ENCODE measurements at regions of chr7 and their contacts with region 1.

Region 1: GRCh38 chr7:24812310-24812945 is 55.2 kb upstream of the GSDME start:
- DNase-seq: peak; percentile 24 to 60 (median 37)
- H3K4me3 ChIP-seq: no peak overlapping the region
- H3K27ac ChIP-seq: no peak overlapping the region
- H3K4me1 ChIP-seq: no peaks in the 10 kb centered on the region
- H3K27me3 ChIP-seq: no peaks in the 10 kb centered on the region

Region 2: GRCh38 chr7:24800667-24801066 is 11.8 kb before region 1 on chr7:
- CTCF ChIA-PET with region 1: interaction called, 11 read pairs
- POLR2A ChIA-PET with region 1: no interaction called
- DNase-seq: no peak
- H3K4me3 ChIP-seq: no peak overlapping the region
- H3K27ac ChIP-seq: no peak overlapping the region
- H3K4me1 ChIP-seq: no peaks in the 10 kb centered on the region
- H3K27me3 ChIP-seq: no peaks in the 10 kb centered on the region

Region 3: DNA sequence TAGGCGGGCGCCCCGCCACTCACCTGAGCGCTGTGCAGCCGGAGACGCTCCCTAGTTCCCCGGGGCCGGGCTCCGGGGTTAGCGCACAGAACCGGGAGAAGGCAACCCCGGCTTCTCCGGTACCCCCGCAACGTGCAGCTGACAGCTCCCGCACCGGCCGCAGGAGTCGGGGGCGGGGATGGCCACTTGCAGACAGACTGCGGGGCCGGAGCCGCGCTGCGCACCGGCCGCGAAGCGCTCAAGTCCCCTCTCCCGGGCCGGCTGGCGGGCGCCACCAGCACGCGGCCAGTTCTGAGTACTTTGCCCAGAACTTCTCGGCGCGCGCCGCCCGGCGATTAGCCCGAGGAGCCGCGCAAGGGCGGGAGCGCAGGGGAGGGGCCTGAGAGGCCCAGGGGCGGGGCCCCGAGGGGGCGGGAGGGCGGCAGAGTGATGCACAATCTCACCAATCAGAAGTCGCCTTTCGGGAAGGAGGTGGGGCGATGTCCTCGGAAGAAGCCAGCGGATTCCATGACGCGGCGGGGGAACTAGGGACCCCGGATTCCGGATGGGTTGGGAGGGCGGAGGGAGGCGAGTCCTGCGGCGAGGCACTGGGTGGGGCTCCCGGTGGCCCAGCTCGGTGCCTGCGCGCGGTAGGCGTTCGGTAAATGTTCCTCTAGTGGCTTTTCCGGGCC is 167.6 kb after region 1 on chr7 and contains the start of gene OSBPL3:
- CTCF ChIA-PET with region 1: interaction called, 10 read pairs
- POLR2A ChIA-PET with region 1: no interaction called
- DNase-seq: peak; percentile 93 to 97 (median 97)
- H3K4me3 ChIP-seq: peak within 1 kb of the TSS; percentile 78 to 93 (median 84)
- H3K27ac ChIP-seq: peak within 1 kb of the TSS in 1 of 2 experiments; percentile 79
- H3K4me1 ChIP-seq: peaks cover 0 to 37% (median 28%) of the 10 kb centered on the region in 4 experiments
- H3K27me3 ChIP-seq: peaks cover 0 to 4% (median 0%) of the 10 kb centered on the region in 5 experiments

Region 4: DNA sequence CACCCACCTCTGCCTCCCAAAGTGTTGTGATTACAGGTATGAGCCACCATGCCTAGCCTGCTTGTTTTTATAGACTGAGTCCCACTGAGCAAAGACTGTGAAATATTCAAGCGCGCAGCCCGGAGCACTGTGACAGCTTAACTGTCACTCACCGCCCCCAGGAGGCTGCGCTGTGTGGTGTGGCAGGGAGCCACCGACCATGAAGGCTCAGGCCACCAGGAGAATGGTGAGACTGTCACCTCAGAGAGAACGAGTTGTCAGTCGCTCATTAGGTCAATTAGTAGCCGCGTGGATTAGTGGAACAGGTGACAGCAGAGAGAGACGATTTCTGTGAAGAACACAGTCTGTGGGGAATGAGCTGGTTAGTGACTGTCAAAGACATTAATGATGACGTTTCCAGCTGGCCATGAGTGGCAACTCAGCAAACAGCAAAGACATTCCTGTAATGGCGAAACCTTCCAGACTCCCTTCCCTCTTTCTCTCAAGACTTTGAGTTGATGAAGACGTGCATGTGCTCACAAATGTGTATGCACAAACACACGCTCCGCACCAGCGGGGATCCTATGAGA is 248.1 kb after region 1 on chr7:
- CTCF ChIA-PET with region 1: interaction called, 14 read pairs
- POLR2A ChIA-PET with region 1: no interaction called
- DNase-seq: no peak
- H3K4me3 ChIP-seq: no peak overlapping the region
- H3K27ac ChIP-seq: no peak overlapping the region
- H3K4me1 ChIP-seq: peaks cover 0 to 9% (median 4%) of the 10 kb centered on the region in 4 experiments
- H3K27me3 ChIP-seq: no peaks in the 10 kb centered on the region

Region 5: DNA sequence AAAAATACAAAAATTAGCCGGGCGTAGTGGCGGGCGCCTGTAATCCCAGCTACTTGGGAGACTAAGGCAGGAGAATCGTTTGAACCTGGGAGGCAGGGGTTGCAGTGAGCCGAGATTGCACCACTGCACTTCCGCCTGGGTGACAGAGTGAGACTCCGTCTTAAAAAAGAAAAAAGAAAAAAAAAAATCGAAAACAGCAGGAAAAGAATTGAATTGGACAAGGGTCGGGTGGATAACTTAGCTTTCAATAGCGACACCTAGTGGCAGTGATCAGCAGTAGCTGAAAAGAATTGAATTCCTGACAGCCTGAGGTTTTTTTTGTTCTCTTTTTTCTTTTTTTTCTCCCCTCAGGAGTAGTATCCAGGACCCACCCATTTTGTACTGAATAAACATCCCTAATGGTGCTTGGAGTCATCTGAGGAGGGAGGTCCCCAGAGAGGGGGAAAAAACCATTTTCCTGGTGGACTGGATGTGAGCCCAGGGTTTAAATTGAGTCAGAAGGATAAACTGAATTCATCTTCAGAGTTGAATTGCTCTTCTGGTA is 257.5 kb after region 1 on chr7:
- CTCF ChIA-PET with region 1: interaction called, 22 read pairs
- POLR2A ChIA-PET with region 1: no interaction called
- DNase-seq: peak; percentile 78 to 86 (median 82)
- H3K4me3 ChIP-seq: no peak overlapping the region
- H3K27ac ChIP-seq: no peak overlapping the region
- H3K4me1 ChIP-seq: peaks cover 0 to 13% (median 5%) of the 10 kb centered on the region in 4 experiments
- H3K27me3 ChIP-seq: no peaks in the 10 kb centered on the region

Region 6: DNA sequence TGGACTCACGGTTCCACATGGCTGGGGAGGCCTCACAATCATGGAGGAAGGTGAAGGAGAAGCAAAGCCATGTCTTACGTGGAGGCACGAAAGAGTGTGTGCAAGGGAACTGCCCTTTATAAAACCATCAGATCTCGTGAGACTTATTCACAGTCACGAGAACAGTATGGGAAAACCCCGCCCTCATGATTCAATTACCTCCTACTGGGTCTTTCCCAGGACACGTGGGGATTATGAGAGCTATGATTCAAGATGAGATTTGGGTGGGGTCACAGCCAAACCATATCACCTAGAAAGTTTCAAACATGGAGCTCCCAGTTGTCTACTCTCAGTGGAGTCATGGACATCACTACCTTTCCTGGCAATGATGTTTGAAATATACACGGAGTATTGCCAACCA is 263.0 kb after region 1 on chr7:
- CTCF ChIA-PET with region 1: interaction called, 22 read pairs
- POLR2A ChIA-PET with region 1: no interaction called
- DNase-seq: no peak
- H3K4me3 ChIP-seq: no peak overlapping the region
- H3K27ac ChIP-seq: no peak overlapping the region
- H3K4me1 ChIP-seq: peaks cover 0 to 11% (median 5%) of the 10 kb centered on the region in 4 experiments
- H3K27me3 ChIP-seq: no peaks in the 10 kb centered on the region

Region 7: DNA sequence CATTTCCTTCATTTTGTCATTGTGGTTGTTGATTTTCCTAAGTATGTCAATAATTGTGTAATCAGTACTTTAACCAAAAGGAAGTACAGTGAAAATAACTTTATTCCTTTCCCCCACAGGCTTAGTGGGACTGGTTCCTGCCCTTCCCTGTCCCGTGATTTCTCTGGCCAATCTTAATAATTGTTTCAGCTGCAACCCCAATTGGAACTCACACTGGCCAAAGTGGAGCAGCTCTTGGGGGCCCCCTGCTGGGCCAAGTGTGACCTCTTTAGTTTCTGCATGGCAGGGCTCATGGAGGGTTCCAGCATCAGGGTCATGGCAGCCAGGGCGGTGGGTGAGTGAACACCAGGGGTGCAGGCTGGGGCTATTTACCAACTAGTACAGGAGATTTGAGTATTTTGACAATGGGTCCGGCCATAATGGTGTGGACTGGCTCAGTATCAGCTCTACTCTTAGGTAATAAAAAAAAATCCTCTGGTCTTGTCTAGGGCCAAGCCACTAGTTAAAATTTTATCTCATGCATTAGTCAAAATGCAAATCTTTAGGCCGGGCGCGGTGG is 280.9 kb after region 1 on chr7:
- CTCF ChIA-PET with region 1: interaction called, 174 read pairs
- POLR2A ChIA-PET with region 1: no interaction called
- DNase-seq: peak; percentile 72 to 83 (median 79)
- H3K4me3 ChIP-seq: no peak overlapping the region
- H3K27ac ChIP-seq: no peak overlapping the region
- H3K4me1 ChIP-seq: peaks cover 0 to 3% (median 1%) of the 10 kb centered on the region in 4 experiments
- H3K27me3 ChIP-seq: no peaks in the 10 kb centered on the region

Measured in common myeloid progenitor, CD34-positive (primary cell).